ENCODE measurements at regions of chr18 and their contacts with region 1.

Region 1: DNA sequence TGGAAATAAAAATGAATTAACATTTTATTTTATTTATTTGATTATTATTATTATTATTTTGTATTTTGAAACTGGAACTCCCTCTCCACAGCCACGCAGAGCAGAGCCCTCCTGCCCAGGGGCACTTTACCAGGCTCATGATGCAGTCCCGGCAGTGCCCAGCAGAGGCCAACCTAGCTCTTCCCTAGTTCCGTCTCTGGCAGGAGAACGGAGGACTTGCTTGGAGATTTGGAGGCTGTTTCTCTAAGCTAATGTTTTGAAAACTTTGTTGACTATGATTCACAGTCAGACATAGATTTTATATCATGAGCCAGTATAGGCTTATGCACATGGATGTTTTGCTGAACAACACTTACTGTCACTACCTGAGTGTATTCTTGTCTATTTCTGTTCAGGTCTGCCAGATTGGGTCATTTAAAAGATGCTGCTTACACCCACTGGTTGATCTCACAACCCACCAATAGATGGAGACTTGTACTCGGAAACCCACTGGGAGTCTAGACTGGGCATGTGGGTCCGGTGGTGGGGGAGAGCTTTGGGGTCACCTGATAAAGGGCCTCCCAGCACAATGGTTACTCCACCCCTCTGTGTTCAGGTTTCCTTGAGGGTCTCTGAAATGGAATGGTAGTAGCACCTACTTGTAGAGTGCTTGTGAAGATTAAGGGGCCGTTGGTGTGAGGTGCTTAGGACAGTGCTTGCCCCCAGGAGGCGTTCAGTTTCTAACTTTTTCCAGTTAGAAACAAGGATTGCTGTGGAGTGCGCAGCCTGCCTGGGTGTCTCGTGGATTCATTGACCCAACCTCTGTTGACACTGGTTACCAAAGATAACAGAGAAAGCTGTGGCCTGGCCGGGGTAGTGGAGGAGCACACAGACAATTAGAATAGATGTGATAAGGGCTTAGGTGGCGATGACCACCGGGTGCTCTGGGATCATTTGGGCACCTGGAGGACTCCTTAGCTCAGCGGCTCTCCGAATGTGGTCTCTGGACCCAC is 177.3 kb downstream of the HAUS1 start:
- DNase-seq: peak; percentile 62
- CTCF ChIP-seq: peak; percentile 82

Region 2: GRCh38 chr18:45260125-45260524 is 1021.4 kb before region 1 on chr18:
- in situ Hi-C with region 1: no loop called
- DNase-seq: no peak
- CTCF ChIP-seq: no peak

Region 3: GRCh38 chr18:46042571-46043123 is 238.8 kb before region 1 on chr18:
- in situ Hi-C with region 1: no loop called
- DNase-seq: no peak
- CTCF ChIP-seq: no peak

Region 4: GRCh38 chr18:46481048-46481846 is 199.8 kb after region 1 on chr18:
- in situ Hi-C with region 1: loop called (anchors 25 kb)
- DNase-seq: peak; percentile 53
- CTCF ChIP-seq: peak; percentile 28

Region 5: DNA sequence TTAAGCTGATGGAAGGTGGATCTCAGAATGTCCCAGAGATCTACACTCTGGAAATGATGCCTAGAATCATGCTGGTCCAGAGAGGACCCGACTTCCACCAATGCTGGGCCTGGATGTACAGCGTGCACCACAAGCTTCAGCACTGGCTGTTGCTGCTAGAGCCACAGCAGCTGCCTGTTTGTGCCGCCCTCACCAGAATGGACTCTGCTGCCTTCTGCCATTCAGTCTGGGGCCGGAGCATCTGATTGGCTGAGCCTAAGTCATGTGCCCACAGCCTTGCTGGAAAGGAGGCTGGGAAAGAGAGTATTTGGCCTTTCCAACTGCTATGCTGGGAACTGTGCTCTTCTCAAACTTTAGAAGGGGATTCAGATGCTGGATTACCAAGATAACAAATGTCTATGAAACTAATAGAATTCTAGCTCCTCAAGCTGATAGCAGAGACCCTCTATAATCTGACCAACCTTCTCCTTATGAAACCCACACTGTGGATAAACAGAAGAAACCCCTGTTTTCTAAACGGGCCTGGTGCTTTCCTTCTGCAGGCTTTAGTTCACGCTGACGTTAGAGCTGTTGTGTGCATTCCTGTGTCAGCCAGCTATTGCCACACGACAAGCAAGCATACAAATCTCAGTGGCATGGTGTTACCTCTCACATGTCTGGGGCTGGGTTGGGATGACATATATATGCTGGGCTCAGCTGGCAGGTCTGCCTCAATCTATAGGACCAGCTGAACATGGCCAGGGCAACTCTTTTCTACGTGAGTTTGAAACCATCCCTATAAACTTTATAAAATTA is 379.7 kb after region 1 on chr18:
- in situ Hi-C with region 1: loop called (anchors 10 kb)
- DNase-seq: no peak
- CTCF ChIP-seq: no peak

Measured in GM13976 (cell line).